ENCODE measurements at regions of chr1 and their contacts with region 1.

Region 1: DNA sequence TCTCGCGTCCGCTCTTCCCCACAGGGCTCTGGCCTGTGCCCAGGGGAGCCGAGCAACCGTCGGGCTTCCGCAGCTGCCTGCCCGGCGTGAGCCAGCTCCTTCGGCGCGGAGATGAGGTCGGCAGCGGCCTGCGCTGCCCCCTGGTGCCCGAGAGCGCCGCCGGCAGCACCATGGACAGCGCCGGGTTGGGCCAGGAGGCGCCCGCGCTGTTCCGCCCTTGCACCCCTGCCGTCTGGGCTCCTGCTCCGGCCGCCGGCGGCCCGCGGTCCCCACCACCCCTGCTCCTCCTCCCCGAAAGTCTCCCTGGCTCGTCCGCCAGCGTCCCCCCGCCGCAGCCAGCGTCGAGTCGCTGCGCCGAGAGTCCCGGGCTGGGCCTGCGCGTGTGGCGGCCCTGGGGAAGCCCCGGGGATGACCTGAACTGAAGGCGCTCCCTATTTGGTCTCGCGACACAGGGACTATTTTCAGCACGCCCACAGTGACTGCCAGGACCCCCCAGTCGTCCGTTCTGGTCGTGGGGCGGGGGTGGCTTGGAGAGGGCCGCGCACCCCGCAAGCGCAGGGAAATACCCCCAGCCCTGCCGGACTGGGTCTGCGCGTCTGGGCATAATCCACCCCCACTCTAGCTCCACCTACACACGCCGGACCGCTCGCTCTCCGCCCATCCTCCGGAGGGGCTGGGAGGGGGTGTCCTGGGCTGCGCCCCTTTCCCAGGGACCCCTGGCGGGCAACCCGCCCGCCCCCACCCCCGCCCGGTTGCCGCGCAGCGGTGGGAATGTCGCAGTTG is 1.3 kb downstream of the HES3 start:
- DNase-seq: no peak
- H3K4me3 ChIP-seq: peak overlapping the region; percentile 27
- CTCF ChIP-seq: peak; percentile 99

Region 2: DNA sequence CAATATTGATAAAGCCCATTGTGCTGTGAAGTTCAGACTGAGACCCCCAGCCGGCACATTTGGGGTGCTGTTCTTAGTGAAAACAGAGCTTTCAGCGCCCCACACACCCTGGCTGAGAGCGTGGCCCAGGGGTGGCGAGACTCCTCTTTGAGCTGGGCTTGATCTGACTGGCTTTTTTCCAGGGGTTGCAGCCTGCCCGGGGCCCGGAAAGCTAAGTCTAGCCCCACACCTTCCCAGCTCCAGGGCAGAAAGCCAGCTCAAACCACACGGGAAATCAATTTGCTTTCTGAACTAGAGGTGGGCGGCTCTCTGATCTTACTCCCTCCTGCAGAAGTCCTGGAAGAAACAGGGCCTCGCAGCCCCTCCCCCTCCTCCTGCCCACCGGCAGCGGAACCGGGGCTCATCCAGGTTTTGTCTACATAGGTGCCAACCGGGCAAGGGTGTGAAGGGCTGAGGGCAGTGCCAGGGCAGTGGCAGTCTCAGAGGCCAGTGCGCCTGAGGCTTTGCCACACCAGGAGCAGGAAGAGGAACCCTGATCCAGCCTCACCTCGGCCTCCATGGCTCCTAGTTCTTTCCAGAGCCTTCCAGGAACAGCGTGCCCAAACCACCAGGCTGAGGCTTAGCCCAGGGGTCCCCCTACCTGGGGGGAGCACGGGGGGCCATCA is 408.4 kb before region 1 on chr1:
- CTCF ChIA-PET with region 1: no interaction called
- POLR2A ChIA-PET with region 1: no interaction called
- DNase-seq: no peak
- H3K4me3 ChIP-seq: no peak overlapping the region
- CTCF ChIP-seq: no peak

Region 3: GRCh38 chr1:6198646-6199297 is 46.5 kb before region 1 on chr1:
- CTCF ChIA-PET with region 1: no interaction called
- POLR2A ChIA-PET with region 1: no interaction called
- DNase-seq: no peak
- H3K4me3 ChIP-seq: peak overlapping the region; percentile 93
- CTCF ChIP-seq: no peak

Region 4: DNA sequence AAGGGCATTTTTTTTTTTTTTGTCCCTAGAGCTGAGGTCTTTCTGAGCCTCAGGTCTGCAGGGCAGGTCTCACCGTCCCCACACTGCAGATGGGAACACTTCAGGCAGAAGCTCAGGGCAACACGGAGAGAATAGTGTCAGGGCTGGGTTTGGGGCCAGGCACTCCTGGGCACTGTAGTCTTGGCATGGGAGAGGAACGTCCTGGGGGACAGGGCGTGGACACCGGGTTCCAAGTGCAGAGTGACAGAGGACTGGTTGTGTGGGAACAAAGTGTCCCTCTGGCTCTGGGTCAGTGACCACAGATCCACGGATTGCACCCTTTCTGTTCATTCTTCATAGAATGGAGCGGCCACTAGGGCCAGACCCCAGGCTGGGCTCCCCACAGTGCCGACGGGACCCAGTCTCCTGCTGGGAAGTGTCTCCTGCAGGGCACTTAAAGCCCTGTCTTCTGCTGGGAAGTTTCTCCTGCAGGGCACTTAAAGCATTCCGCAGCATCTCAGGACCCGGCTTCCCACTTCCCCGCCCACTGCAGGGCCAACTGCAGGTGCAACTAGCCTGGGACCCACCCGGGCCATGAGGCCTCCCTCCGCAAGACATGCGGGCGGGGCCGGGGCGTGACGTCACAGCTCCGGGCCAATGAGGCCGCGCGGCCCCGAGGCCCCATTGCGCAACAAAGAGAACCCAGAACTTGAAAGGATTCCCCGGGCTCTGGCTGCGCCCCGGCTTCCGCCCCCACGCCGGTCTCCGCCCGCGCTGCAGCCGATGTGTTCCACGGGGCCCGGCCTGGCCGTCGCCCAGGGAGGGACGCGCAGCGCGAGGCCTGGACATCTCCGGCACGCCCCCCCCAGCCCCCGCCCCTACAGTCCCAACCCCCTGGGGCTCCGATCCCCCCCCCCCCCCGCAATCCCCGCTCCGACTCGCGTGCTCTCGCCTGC is 14.5 kb after region 1 on chr1:
- CTCF ChIA-PET with region 1: interaction called, 42 read pairs
- POLR2A ChIA-PET with region 1: no interaction called
- DNase-seq: no peak
- H3K4me3 ChIP-seq: peak overlapping the region; percentile 60
- CTCF ChIP-seq: no peak

Region 5: DNA sequence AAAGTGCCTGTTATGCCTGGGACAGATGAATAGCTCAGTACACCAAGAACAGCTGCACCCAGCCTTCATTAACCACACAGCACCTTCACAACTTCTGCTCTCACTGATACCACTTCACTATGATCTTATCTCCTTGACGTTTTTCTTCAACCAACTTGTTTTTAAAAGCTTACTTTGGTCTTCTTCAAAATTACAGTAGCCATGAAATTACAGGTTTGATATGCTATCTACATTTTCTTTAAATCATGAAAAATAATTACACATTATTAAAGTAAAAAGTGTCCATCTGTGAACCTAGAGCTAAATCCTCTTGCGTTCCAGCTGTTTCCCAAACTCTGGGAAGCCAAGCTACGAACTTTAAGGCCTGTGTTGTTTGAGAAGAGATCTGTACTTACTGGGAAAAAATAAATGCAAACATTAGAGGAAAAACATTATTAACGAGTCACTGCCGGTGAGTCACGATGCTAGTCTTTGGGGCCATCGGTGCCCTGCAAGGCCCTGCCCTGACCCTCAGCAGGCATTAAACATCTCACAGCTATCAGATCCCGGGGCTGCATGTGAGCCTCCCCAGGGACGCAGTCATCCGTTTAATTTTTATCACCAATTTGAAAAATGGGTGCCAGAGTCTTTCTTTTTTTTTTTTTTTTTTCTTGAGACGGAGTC is 72.0 kb after region 1 on chr1:
- CTCF ChIA-PET with region 1: interaction called, 11 read pairs
- POLR2A ChIA-PET with region 1: no interaction called
- DNase-seq: no peak
- H3K4me3 ChIP-seq: no peak overlapping the region
- CTCF ChIP-seq: no peak

Region 6: GRCh38 chr1:6393400-6394187 is 148.3 kb after region 1 on chr1 and contains the start of gene ACOT7:
- CTCF ChIA-PET with region 1: interaction called, 10 read pairs
- POLR2A ChIA-PET with region 1: no interaction called
- DNase-seq: no peak
- H3K4me3 ChIP-seq: peak within 1 kb of the TSS; percentile 67
- CTCF ChIP-seq: peak; percentile 35

Region 7: DNA sequence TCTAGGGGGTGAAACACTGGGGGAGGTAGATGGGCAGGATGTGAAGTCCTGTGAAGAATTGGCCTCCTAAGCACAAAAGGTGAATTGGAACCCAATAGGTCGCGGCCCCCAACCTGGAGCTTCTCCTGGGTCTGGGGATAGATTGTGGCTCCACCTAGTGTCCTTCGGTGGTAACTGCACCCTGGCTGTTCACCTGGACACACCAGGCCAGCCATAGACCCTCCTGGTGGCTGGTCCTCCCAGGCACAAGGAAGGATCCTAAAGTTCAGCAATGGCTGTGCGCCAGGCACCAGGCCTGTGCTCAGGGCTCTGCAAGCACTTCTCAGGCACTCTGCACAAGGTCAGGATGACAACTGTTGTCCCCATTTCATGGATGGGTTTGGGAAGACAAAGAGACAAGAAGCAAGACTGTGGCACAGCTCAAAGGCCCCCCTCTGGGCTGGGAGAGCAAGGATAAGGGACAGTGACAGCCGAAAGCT is 192.8 kb after region 1 on chr1:
- CTCF ChIA-PET with region 1: interaction called, 82 read pairs
- POLR2A ChIA-PET with region 1: no interaction called
- DNase-seq: no peak
- H3K4me3 ChIP-seq: no peak overlapping the region
- CTCF ChIP-seq: peak; percentile 88